ENCODE measurements at regions of chr4 and their contacts with region 1.

Region 1: DNA sequence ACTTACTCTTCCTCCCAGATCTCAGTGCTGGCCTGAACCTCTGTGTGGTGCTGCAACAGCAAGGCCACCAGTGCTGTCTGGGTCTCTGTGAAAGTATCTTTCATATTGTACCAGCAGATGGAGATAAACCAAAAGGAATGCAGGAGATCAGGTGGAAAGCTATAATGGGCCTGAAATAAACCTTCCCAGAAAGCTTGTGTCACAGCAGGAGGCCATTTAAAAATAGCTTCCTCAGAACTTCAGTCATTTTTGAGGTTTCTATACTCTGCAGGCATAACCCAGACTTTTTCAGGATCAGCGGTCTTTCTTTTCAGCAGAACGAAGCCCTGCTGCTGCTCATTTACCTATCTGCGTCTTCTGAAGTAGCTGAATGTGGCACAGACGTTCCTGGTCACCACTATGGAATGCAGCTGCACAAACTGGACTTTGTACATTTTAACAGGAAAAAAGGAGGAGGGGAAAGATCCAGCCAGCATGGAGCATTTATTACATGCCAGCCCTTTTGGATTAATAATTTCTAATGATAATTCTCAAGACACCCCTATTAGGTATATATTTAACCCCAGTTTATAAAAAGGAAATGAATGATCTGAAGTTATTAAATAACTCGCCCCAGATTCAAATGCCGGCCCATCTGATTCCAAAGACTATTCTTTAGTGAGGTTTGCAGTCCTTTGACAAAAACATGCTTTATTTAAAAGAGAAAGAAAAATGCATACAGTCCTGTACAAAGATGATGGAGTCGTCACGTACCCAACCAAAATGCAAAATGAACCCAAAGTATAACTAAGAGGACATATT is 119.7 kb downstream of the NFKB1 start:
- DNase-seq: no peak
- ATAC-seq: peak; percentile 91 to 95 (median 92)
- H3K4me3 ChIP-seq: peak overlapping the region in 7 of 12 donors; percentile 1 to 35 (median 17)
- H3K27ac ChIP-seq: peak overlapping the region in 1 of 12 donors; percentile 58
- H3K4me1 ChIP-seq: peaks cover 0 to 19% (median 4%) of the 10 kb centered on the region in 12 donors
- H3K27me3 ChIP-seq: no peaks in the 10 kb centered on the region
- CTCF ChIP-seq: peak; percentile 18 to 64 (median 46)
- POLR2A ChIP-seq: no peak

Region 2: DNA sequence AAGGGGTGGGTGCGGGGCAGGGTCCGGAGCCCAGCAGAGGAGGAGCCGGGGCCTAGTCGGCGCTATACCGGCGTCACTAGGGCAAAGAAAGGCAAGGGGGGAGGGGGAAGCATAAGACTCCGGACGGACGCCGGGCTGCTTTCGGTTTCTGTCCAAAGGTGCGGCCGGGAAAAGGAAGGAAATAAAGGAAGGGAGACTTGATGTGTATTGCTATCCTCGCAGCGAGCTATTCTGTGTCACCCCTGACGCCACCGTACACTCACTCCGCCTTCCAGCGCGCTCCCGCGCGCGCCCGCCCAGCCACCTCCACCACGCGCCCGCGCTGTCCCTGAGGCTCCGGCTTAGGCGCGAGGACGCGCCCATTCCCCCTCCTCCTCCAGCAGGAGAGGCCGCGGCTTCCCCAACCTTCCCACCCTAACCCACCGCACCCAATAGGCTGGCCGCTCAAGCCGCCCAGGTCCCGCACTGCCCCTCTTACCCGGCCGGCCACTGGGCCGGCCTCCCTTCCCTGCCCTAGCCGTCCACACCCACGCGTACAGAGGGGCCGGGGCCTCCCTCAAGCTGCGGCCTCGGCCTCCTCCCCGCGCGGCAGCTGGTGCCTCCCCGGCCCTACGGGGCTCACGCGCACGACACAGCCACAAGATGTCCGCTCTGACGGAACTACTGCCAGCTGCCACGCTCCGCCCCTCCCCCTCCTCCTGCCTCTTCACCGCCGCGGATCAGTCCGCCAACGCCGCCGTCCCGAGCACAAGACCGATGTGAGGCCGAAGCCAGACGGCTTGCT is 206.2 kb after region 1 on chr4 and contains the start of gene UBE2D3:
- intact Hi-C with region 1: loop called in 2 of 10 experiments (anchors 5 to 10 kb)
- DNase-seq: peak; percentile 94 to 97 (median 95)
- ATAC-seq: peak; percentile 59 to 78 (median 74)
- H3K4me3 ChIP-seq: peak within 1 kb of the TSS; percentile 83 to 99 (median 91)
- H3K27ac ChIP-seq: peak within 1 kb of the TSS; percentile 100
- H3K4me1 ChIP-seq: peaks cover 0 to 46% (median 37%) of the 10 kb centered on the region in 12 donors
- H3K27me3 ChIP-seq: no peaks in the 10 kb centered on the region
- CTCF ChIP-seq: peak in 4 of 12 donors; percentile 16 to 32 (median 22)
- POLR2A ChIP-seq: peak in 1 of 2 donors; percentile 25
- total RNA-seq, gene UBE2D3: 216 to 381 (median 258) TPM